ENCODE measurements at regions of chr1 and their contacts with region 1.

Region 1: DNA sequence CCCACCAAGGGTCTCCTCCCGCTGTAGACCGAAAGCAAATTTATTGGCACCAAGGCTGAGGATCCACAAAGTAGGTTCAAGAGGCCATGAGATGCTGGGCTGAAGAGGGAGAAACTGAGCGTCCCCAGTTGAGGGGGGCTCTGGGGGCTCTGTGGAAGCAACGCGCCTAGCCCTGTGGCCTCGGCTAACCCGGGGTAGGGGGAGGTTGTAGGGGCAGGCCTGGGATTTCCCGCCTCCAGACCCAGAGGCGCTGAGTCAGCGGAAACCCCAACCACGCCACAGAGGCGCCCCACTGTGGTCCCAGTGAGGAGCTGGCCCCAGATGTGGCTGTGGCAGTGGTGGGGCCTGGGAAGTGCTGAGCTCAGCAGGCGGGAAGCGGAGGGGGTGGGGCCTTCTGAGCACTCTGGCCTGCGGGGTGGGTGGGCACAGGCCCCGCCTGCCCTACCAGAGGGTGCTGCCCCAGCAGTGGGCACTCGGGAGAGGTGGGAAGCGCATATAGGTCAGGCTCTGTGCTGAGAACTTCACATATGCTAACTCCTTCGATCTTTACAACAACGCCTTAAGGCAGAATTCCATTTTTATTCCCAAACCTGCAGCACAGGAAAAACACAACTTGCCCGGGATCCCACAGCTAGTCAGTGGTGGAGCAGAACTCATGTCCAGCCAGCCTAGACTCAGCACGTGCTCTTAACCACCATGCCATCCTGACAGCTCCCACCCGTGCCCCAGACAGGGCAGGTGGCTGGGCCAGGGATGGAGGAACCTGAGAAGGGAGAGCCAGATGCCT is 1.5 kb upstream of the COL16A1 start:
- DNase-seq: peak in 1 of 2 experiments; percentile 80
- H3K4me3 ChIP-seq: peak overlapping the region in 3 of 4 experiments; percentile 15 to 69 (median 17); a peak in 5 of 8 replicates
- H3K27ac ChIP-seq: no peak overlapping the region; the same call in 1 of the 2 replicates
- H3K4me1 ChIP-seq: peaks cover 15 to 35% (median 16%) of the 10 kb centered on the region in 4 experiments
- H3K27me3 ChIP-seq: no peaks in the 10 kb centered on the region; a peak in 1 of 7 replicates
- CTCF ChIP-seq: peak in 2 of 3 experiments; percentile 6 to 24; a peak in 2 of 4 replicates
- EP300 ChIP-seq: no peak
- POLR2A ChIP-seq: no peak
- RAD21 ChIP-seq: peak; percentile 32 to 47; a peak in 3 of 4 replicates

Region 2: GRCh38 chr1:31587720-31588394 is 117.4 kb before region 1 on chr1:
- CTCF ChIA-PET with region 1: no interaction called
- POLR2A ChIA-PET with region 1: no interaction called
- DNase-seq: peak in 1 of 2 experiments; percentile 91
- H3K4me3 ChIP-seq: peak overlapping the region in 1 of 4 experiments; percentile 62; a peak in 1 of 8 replicates
- H3K27ac ChIP-seq: no peak overlapping the region
- H3K4me1 ChIP-seq: peaks cover 2 to 12% (median 10%) of the 10 kb centered on the region in 4 experiments
- H3K27me3 ChIP-seq: peaks cover 0 to 12% (median 5%) of the 10 kb centered on the region in 4 experiments; a peak in 4 of 7 replicates
- CTCF ChIP-seq: peak; percentile 72 to 94 (median 94)
- EP300 ChIP-seq: no peak
- POLR2A ChIP-seq: peak in 1 of 2 experiments; percentile 42; a peak in 1 of 3 replicates
- RAD21 ChIP-seq: peak; percentile 43 to 59

Region 3: DNA sequence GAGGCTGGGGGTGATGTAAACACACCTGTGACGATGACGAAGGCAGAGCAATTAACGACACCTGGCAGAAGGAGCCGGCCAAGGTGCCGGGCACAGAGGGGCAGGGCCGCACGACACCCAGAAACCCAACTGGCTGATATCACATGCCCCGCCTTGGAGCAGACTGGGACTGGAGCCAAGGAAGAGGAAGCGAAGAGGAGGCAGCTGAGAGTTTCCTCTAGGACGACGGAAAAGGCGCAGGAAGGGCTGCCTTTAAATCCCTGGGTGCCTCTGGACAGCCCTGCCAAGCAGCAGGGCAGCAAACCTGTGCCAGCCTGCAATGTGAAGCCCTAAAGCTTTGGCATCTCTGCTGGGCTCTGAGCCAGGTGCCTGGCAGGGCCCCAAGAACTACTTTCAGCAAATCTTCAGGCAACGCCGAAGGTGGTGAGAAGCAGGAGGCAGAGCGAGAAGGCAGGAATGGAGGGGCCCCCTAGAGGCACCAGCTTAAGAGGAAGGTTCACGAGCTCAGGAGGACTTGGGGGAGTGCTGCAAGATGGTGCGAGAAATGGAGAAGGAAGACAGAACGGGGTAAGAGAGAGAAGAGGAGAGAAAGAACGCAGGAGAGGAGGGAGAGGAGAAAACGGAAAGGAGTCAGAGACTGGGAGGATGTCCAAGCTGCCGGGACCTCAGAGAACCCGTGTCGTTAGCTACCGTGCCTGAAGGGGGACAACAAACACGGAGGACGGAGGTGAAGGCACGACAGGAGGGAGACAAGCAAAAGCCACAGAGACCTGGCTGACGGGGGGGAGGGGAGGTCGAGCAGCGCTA is 35.3 kb before region 1 on chr1:
- CTCF ChIA-PET with region 1: interaction called, 181 read pairs
- POLR2A ChIA-PET with region 1: interaction called, 6 read pairs
- DNase-seq: no peak
- H3K4me3 ChIP-seq: peak overlapping the region in 1 of 4 experiments; percentile 14; a peak in 1 of 8 replicates
- H3K27ac ChIP-seq: no peak overlapping the region
- H3K4me1 ChIP-seq: peaks cover 0 to 13% (median 8%) of the 10 kb centered on the region in 4 experiments; a peak in 5 of 7 replicates
- H3K27me3 ChIP-seq: no peaks in the 10 kb centered on the region
- CTCF ChIP-seq: peak in 2 of 3 experiments; percentile 1 to 8; a peak in 2 of 4 replicates
- EP300 ChIP-seq: no peak
- POLR2A ChIP-seq: no peak
- RAD21 ChIP-seq: no peak; a peak in 1 of 4 replicates

Region 4: GRCh38 chr1:31683997-31684396 is 21.3 kb before region 1 on chr1:
- CTCF ChIA-PET with region 1: interaction called, 48 read pairs
- POLR2A ChIA-PET with region 1: interaction called, 4 read pairs
- DNase-seq: peak in 1 of 2 experiments; percentile 82
- H3K4me3 ChIP-seq: no peak overlapping the region
- H3K27ac ChIP-seq: no peak overlapping the region
- H3K4me1 ChIP-seq: peaks cover 0 to 1% (median 0%) of the 10 kb centered on the region in 4 experiments; a peak in 2 of 7 replicates
- H3K27me3 ChIP-seq: no peaks in the 10 kb centered on the region
- CTCF ChIP-seq: peak; percentile 72 to 93 (median 84)
- EP300 ChIP-seq: no peak
- POLR2A ChIP-seq: no peak
- RAD21 ChIP-seq: peak; percentile 57 to 66

Region 5: DNA sequence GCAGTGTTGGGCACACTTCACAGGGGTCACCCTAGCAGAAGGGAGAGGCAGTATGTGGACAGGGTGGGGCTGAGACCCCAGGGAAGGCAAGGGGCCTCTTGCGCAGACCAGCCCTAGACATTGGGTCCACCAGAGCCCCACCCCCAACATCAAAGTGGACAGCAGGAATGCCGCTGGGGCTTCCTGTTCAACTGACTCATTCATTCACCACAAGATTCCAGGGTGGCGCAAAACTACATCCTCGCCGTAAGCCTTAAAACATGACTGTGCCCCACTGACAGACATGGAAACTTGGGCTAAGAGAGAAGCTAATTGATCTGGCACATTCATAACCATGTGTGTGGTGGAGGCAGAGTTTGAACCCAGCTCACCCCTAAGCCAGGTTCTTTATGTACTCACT is 15.5 kb before region 1 on chr1:
- CTCF ChIA-PET with region 1: interaction called, 48 read pairs
- POLR2A ChIA-PET with region 1: interaction called, 11 read pairs
- DNase-seq: no peak
- H3K4me3 ChIP-seq: no peak overlapping the region
- H3K27ac ChIP-seq: no peak overlapping the region
- H3K4me1 ChIP-seq: peaks cover 0 to 4% (median 0%) of the 10 kb centered on the region in 4 experiments; a peak in 3 of 7 replicates
- H3K27me3 ChIP-seq: no peaks in the 10 kb centered on the region
- CTCF ChIP-seq: no peak
- EP300 ChIP-seq: no peak
- POLR2A ChIP-seq: no peak
- RAD21 ChIP-seq: no peak

Measured in H1 (cell line).